Testis (tissue), 5 donors: ENCODE measurements at regions of chr1 and their contacts with region 1.

Region 1: DNA sequence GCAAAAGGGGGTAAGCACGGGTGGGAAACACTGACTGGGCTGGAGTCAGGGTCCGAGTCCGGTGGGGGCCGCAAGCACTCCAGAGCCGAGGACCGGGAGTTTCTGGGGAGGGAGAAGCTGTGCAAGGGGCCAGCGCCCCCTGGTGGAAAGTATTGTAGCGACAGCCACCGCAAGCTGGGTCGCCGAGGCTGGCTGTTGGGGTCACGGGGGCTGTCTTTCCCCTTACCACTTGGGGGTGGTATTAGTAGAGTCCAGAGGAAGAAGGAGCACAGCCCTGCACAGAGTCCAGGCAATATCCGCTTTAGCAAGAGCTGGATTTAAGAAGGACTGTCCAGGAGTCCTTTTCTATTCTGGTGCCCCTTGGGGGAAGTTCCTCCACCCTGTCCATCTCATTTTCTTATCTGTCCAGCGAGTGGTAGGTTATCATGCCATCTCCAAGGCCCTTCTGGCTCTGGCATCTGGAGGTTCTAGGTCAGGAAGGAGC is 17.9 kb upstream of the ETV3 start:
- DNase-seq: peak; percentile 89
- H3K4me3 ChIP-seq: peak overlapping the region; percentile 24 to 48
- H3K27ac ChIP-seq: no peak overlapping the region
- H3K4me1 ChIP-seq: peaks cover 25% of the 10 kb centered on the region
- H3K27me3 ChIP-seq: no peaks in the 10 kb centered on the region
- CTCF ChIP-seq: peak; percentile 96 to 99 (median 97)
- POLR2A ChIP-seq: no peak

Region 2: GRCh38 chr1:157090196-157090647 is 65.9 kb before region 1 on chr1:
- intact Hi-C with region 1: loop called (anchors 5 kb)
- DNase-seq: peak; percentile 95
- H3K4me3 ChIP-seq: no peak overlapping the region
- H3K27ac ChIP-seq: no peak overlapping the region
- H3K4me1 ChIP-seq: no peaks in the 10 kb centered on the region
- H3K27me3 ChIP-seq: no peaks in the 10 kb centered on the region
- CTCF ChIP-seq: peak; percentile 92 to 95 (median 94)
- POLR2A ChIP-seq: no peak